ENCODE measurements at regions of chr17 and their contacts with region 1.

Region 1: GRCh38 chr17:77420804-77421629 is 280.2 kb downstream of the SEC14L1 start:
- DNase-seq: peak in 1 of 2 donors; percentile 70
- ATAC-seq: peak; percentile 7 to 21
- H3K4me3 ChIP-seq: peak overlapping the region; percentile 1 to 17 (median 9)
- H3K27ac ChIP-seq: peak overlapping the region; percentile 85 to 92 (median 86)
- H3K4me1 ChIP-seq: peaks cover 61 to 64% of the 10 kb centered on the region in 2 donors
- H3K27me3 ChIP-seq: no peaks in the 10 kb centered on the region
- CTCF ChIP-seq: no peak
- POLR2A ChIP-seq: no peak

Region 2: GRCh38 chr17:77287432-77288071 is 133.5 kb before region 1 on chr17:
- in situ Hi-C with region 1: no loop called
- intact Hi-C with region 1: loop called (anchors 5 kb)
- DNase-seq: peak; percentile 91 to 96
- ATAC-seq: peak; percentile 78 to 88
- H3K4me3 ChIP-seq: peak overlapping the region; percentile 29 to 53 (median 47)
- H3K27ac ChIP-seq: peak overlapping the region; percentile 95 to 96 (median 95)
- H3K4me1 ChIP-seq: peaks cover 45 to 47% of the 10 kb centered on the region in 2 donors
- H3K27me3 ChIP-seq: no peaks in the 10 kb centered on the region
- CTCF ChIP-seq: no peak
- POLR2A ChIP-seq: peak; percentile 78 to 80

Region 3: GRCh38 chr17:77365584-77366186 is 55.3 kb before region 1 on chr17:
- in situ Hi-C with region 1: no loop called
- intact Hi-C with region 1: loop called (anchors 2 kb)
- DNase-seq: peak; percentile 89 to 94
- ATAC-seq: peak; percentile 80 to 83
- H3K4me3 ChIP-seq: peak overlapping the region in 1 of 4 donors; percentile 15
- H3K27ac ChIP-seq: peak overlapping the region; percentile 79 to 98 (median 88)
- H3K4me1 ChIP-seq: peaks cover 39 to 61% of the 10 kb centered on the region in 2 donors
- H3K27me3 ChIP-seq: no peaks in the 10 kb centered on the region
- CTCF ChIP-seq: peak in 1 of 5 experiments; percentile 8
- POLR2A ChIP-seq: peak in 1 of 2 donors; percentile 29

Region 4: DNA sequence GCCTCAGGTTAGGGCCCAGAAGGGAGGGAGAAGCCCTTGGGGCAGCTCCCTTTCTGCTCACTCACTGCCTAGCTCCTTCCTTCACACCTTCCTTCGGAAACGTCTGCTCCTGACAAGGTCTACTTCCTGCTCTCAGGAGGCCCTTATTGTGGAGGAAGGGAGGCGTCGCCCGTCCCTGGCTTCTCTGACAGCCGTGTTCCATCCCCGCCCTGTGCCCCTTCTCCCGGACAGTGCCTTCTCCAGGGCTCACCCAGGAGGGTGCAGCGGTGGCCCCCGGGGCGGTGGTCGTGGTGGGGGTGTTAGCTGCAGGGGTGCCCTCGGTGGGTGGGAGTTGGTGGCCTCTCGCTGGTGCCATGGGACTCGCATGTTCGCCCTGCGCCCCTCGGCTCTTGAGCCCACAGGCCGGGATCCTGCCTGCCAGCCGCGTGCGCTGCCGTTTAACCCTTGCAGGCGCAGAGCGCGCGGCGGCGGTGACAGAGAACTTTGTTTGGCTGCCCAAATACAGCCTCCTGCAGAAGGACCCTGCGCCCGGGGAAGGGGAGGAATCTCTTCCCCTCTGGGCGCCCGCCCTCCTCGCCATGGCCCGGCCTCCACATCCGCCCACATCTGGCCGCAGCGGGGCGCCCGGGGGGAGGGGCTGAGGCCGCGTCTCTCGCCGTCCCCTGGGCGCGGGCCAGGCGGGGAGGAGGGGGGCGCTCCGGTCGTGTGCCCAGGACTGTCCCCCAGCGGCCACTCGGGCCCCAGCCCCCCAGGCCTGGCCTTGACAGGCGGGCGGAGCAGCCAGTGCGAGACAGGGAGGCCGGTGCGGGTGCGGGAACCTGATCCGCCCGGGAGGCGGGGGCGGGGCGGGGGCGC is 48.3 kb before region 1 on chr17:
- in situ Hi-C with region 1: no loop called
- intact Hi-C with region 1: loop called (anchors 2 kb)
- DNase-seq: peak; percentile 56
- ATAC-seq: peak; percentile 22 to 24
- H3K4me3 ChIP-seq: peak overlapping the region; percentile 72 to 87 (median 78)
- H3K27ac ChIP-seq: peak overlapping the region; percentile 85 to 96 (median 89)
- H3K4me1 ChIP-seq: peaks cover 57 to 72% of the 10 kb centered on the region in 2 donors
- H3K27me3 ChIP-seq: no peaks in the 10 kb centered on the region
- CTCF ChIP-seq: no peak
- POLR2A ChIP-seq: no peak

Measured in gastrocnemius medialis (tissue), 4 donors.